ENCODE measurements at regions of chr11 and their contacts with region 1.

Region 1: DNA sequence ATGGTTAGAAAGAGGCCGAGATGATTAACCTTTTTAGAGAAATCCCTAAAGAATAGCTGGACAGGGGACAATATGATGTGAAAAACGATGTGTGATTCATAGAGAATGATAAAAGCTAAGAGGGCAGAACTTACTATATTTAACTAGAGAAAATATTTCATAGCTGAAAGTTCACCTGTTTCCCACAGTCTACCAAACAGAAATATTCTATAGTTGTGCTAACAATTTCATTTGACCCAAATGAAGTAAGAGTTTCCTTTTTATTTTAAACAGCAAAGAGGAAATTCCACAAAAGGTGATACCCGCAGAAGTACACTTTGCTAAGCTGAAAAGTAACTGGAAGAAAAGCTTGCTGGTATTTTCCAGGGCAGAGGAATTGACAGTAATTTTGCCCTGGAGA is 26.7 kb downstream of the ALKBH8 start:
- DNase-seq: no peak
- ATAC-seq: no peak
- H3K4me3 Mint-ChIP-seq: no peak overlapping the region
- H3K27ac Mint-ChIP-seq: no peak overlapping the region
- H3K4me1 Mint-ChIP-seq: no peaks in the 10 kb centered on the region
- H3K27me3 Mint-ChIP-seq: no peaks in the 10 kb centered on the region
- CTCF ChIP-seq: no peak

Region 2: GRCh38 chr11:107549253-107549953 is 10.6 kb after region 1 on chr11:
- CTCF ChIA-PET with region 1: interaction called, 18 read pairs
- POLR2A ChIA-PET with region 1: interaction called, 3 read pairs
- intact Hi-C with region 1: no loop called
- DNase-seq: no peak
- ATAC-seq: peak; percentile 67
- H3K4me3 Mint-ChIP-seq: no peak overlapping the region
- H3K27ac Mint-ChIP-seq: no peak overlapping the region
- H3K4me1 Mint-ChIP-seq: no peaks in the 10 kb centered on the region
- H3K27me3 Mint-ChIP-seq: no peaks in the 10 kb centered on the region
- CTCF ChIP-seq: peak; percentile 67

Region 3: GRCh38 chr11:107583629-107584195 is 44.9 kb after region 1 on chr11:
- CTCF ChIA-PET with region 1: no interaction called
- POLR2A ChIA-PET with region 1: no interaction called
- intact Hi-C with region 1: no loop called
- DNase-seq: no peak
- ATAC-seq: no peak
- H3K4me3 Mint-ChIP-seq: no peak overlapping the region
- H3K27ac Mint-ChIP-seq: no peak overlapping the region
- H3K4me1 Mint-ChIP-seq: no peaks in the 10 kb centered on the region
- H3K27me3 Mint-ChIP-seq: peaks cover 39% of the 10 kb centered on the region
- CTCF ChIP-seq: no peak